Aorta (tissue), 5 donors: ENCODE measurements at regions of chr20 and their contacts with region 1.

Region 1: GRCh38 chr20:57596998-57597939 is 23.0 kb downstream of the ZBP1 start:
- DNase-seq: peak; percentile 82 to 91
- ATAC-seq: peak; percentile 83
- H3K4me3 ChIP-seq: no peak overlapping the region
- H3K27ac ChIP-seq: no peak overlapping the region
- H3K4me1 ChIP-seq: no peaks in the 10 kb centered on the region
- H3K27me3 ChIP-seq: no peaks in the 10 kb centered on the region

Region 2: GRCh38 chr20:57391074-57391554 is 206.2 kb before region 1 on chr20 and contains the start of gene RBM38:
- intact Hi-C with region 1: loop called (anchors 5 to 10 kb)
- DNase-seq: peak; percentile 65 to 88
- ATAC-seq: peak; percentile 82
- H3K4me3 ChIP-seq: peak within 1 kb of the TSS; percentile 72 to 87
- H3K27ac ChIP-seq: peak within 1 kb of the TSS in 1 of 2 donors; percentile 43
- H3K4me1 ChIP-seq: peaks cover 0 to under 1% of the 10 kb centered on the region in 2 donors
- H3K27me3 ChIP-seq: no peaks in the 10 kb centered on the region
- total RNA-seq, gene RBM38: 19.3 to 20.7 TPM

Region 3: DNA sequence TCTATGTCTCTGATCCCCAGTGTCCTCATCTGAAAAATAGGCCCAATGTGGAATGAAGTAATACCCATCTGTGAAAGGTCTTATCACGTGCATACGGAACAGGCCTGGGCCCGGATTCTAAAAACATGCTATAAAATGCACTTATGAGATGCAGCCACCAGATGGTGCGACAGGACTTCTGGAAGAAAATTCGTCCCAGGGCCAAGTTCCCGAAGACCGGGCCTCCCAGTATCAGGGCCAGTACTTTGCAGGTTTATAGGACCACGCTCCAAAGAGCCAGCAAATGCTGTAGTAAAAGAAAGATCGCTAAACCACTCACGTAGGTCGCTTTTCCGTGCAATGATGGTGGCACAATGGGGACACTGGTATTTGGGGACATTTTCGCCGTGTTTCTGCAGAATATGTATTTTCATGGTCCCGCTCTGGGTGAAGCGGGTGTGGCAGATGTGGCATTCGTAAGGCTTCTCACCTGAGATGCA is 83.0 kb before region 1 on chr20:
- intact Hi-C with region 1: loop called (anchors 1 to 2 kb)
- DNase-seq: peak; percentile 74 to 86
- ATAC-seq: peak; percentile 86
- H3K4me3 ChIP-seq: no peak overlapping the region
- H3K27ac ChIP-seq: no peak overlapping the region
- H3K4me1 ChIP-seq: no peaks in the 10 kb centered on the region
- H3K27me3 ChIP-seq: no peaks in the 10 kb centered on the region

Region 4: GRCh38 chr20:57893366-57893999 is 296.2 kb after region 1 on chr20:
- intact Hi-C with region 1: no loop called
- DNase-seq: peak in 1 of 2 donors; percentile 23
- ATAC-seq: no peak
- H3K4me3 ChIP-seq: no peak overlapping the region
- H3K27ac ChIP-seq: no peak overlapping the region
- H3K4me1 ChIP-seq: no peaks in the 10 kb centered on the region
- H3K27me3 ChIP-seq: no peaks in the 10 kb centered on the region

Region 5: GRCh38 chr20:58209652-58210397 is 612.6 kb after region 1 on chr20:
- intact Hi-C with region 1: loop called (anchors 1 kb)
- DNase-seq: peak; percentile 87 to 96
- ATAC-seq: peak; percentile 91
- H3K4me3 ChIP-seq: no peak overlapping the region
- H3K27ac ChIP-seq: no peak overlapping the region
- H3K4me1 ChIP-seq: no peaks in the 10 kb centered on the region
- H3K27me3 ChIP-seq: no peaks in the 10 kb centered on the region

Region 6: DNA sequence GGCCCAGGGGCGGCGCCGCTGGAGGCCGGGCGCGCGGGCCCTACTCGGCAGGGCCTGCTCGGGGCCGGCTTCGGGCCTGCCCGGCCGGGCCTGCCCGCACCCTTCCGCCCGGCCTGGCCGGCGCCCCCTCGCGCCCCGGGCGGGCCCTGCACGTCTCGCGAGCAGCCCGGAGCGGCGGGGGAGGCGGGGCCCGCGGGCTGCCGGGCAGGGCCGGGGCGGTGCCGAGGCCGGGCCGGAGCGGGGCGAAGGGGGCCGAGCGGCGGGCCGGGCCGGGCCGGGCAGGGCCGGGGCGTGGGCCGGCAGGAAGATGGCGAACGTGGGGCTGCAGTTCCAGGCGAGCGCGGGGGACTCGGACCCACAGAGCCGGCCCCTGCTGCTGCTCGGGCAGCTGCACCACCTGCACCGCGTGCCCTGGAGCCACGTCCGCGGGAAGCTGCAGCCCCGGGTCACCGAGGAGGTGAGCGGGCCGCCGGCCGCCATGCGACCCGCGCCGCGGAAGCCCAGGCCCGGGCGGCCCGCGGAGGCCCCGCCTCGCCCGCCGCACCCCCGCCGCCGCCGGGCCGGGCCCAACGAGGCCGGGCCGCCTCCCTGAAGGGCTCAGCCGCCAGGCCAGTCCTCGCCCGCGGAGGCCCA is 1095.4 kb after region 1 on chr20 and contains the start of gene NPEPL1:
- intact Hi-C with region 1: loop called in 1 of 2 experiments (anchors 10 kb)
- DNase-seq: peak; percentile 81 to 90
- ATAC-seq: peak; percentile 83
- H3K4me3 ChIP-seq: peak within 1 kb of the TSS; percentile 32 to 35
- H3K27ac ChIP-seq: peak within 1 kb of the TSS; percentile 30 to 32
- H3K4me1 ChIP-seq: no peaks in the 10 kb centered on the region
- H3K27me3 ChIP-seq: no peaks in the 10 kb centered on the region
- total RNA-seq, gene NPEPL1: 22.1 to 53.1 TPM